ENCODE measurements at regions of chr13 and their contacts with region 1.

Region 1: GRCh38 chr13:26762745-26763330 is 2.3 kb upstream of the GPR12 start:
- DNase-seq: no peak
- ATAC-seq: no peak

Region 2: DNA sequence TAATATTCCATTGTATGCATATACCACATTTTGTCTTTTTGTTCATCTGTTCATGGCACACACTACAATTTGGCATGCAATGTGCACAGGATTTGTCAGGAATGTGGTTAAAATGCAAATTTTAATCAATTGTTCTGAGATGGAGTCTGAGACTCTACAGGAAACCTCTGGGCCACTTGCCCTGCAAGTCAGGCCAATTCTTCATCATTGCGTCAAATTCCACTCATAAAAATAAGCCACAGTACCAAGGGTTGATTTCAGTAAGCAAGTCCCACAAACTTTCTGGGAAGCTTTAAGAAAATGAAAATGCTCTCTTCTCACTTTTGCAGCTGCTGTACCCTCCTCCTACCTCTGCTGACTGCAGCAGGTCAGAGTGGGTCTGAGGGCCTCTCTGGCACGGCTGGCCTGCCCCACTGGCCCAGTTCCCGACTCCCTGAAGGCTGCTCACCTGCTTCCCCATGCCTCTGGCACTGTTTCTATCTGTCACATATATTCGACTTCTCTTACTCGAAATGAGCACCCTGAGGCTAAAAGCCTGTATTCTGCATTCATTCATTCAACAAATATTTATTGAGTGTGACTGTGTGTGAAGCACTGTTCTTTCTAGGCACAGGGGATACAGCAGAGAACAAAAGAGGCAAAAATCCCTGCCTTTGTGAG is 289.1 kb before region 1 on chr13:
- intact Hi-C with region 1: no loop called
- DNase-seq: no peak
- ATAC-seq: no peak

Region 3: GRCh38 chr13:26596458-26596857 is 166.4 kb before region 1 on chr13:
- intact Hi-C with region 1: loop called (anchors 2 kb)
- DNase-seq: no peak
- ATAC-seq: no peak

Measured in sciatic nerve (tissue), 2 donors.